ENCODE measurements at regions of chr1 and their contacts with region 1.

Region 1: DNA sequence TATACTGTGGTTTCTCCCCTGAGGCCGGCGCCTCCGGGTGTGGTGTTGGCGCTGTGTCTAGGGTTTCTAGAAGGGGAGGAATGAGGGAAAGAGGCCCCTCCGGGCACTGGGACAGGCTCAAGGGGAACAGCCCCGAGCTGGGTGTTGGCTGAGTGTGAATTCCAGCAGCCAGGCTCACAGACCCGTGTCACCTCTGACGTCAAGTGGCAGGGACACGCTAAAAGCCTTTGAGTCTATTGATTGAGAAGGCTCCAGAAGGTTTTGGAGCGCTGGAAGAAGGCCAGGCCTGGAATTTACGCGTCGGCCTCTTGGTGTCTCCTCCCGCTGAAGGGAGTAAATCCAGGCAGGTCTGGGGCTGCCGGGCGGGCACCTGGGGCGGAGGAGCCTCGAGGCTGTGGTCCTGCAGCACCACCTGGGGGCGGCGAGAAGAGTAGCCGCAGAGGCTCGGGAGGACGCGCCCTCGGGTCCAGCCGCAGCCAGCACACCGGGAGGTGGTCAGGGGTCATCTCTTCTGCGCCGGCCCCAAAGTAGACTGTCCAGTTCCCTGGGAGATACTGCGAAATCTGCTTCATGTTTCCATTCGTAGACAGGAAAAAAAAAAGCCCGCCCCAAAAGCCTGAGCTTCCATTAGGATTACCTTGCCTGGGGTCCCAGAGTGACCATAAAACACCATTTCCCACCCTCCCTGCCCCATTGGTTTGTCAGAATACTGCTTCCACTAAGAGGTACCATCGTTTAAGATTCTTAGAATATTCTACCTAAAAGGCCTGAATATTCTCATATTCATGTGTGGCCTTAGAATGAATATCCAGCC is 61.7 kb downstream of the TLR5 start:
- DNase-seq: peak; percentile 11
- ATAC-seq: peak; percentile 99
- H3K4me3 ChIP-seq: peak overlapping the region; percentile 16; the same call in 1 of the 2 replicates
- H3K27ac ChIP-seq: no peak overlapping the region
- H3K4me1 ChIP-seq: no peaks in the 10 kb centered on the region
- H3K27me3 ChIP-seq: no peaks in the 10 kb centered on the region; a peak in 1 of 4 replicates
- CTCF ChIP-seq: peak; percentile 76 to 94 (median 93); a peak in 5 of 6 replicates
- EP300 ChIP-seq: no peak
- POLR2A ChIP-seq: no peak
- RAD21 ChIP-seq: peak; percentile 85

Region 2: DNA sequence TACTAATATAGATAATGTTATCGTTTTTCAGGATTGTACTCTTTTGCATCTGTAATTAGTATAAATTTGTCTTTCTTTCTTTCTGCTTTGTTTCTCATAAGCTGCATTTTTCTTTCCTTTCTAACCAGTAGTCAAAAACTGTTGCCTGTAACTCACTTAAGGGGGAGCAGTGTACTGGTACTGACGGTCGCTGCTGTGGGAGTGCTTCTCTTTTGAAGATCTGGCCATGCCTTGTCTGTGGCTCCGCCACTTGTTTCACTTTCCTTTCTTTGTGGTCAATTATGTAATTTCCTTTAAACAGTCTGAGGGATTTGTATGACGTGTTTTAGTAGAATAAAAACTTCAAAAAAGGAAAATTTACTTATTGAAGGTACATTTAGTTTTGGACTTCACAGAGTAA is 426.5 kb before region 1 on chr1:
- CTCF ChIA-PET with region 1: no interaction called
- POLR2A ChIA-PET with region 1: no interaction called
- RAD21 ChIA-PET with region 1: interaction called, 4 read pairs
- SMC1A ChIA-PET with region 1: no interaction called
- in situ Hi-C with region 1: loop called (anchors 10 kb)
- intact Hi-C with region 1: no loop called
- DNase-seq: peak; percentile 72
- ATAC-seq: peak; percentile 98
- H3K4me3 ChIP-seq: no peak overlapping the region
- H3K27ac ChIP-seq: no peak overlapping the region
- H3K4me1 ChIP-seq: peaks cover 30% of the 10 kb centered on the region
- H3K27me3 ChIP-seq: no peaks in the 10 kb centered on the region
- CTCF ChIP-seq: peak; percentile 24 to 38 (median 36); a peak in 5 of 6 replicates
- EP300 ChIP-seq: peak; percentile 42 to 56; a peak in 2 of 4 replicates
- POLR2A ChIP-seq: no peak
- RAD21 ChIP-seq: peak; percentile 49

Region 3: GRCh38 chr1:222739465-222739864 is 341.9 kb before region 1 on chr1:
- CTCF ChIA-PET with region 1: interaction called, 13 read pairs
- POLR2A ChIA-PET with region 1: no interaction called
- RAD21 ChIA-PET with region 1: interaction called, 6 read pairs
- SMC1A ChIA-PET with region 1: interaction called, 11 read pairs
- in situ Hi-C with region 1: loop called (anchors 10 kb)
- intact Hi-C with region 1: loop called (anchors 1 kb)
- DNase-seq: no peak
- ATAC-seq: no peak
- H3K4me3 ChIP-seq: no peak overlapping the region
- H3K27ac ChIP-seq: no peak overlapping the region
- H3K4me1 ChIP-seq: no peaks in the 10 kb centered on the region
- H3K27me3 ChIP-seq: no peaks in the 10 kb centered on the region
- CTCF ChIP-seq: no peak
- EP300 ChIP-seq: no peak
- POLR2A ChIP-seq: no peak
- RAD21 ChIP-seq: no peak

Region 4: GRCh38 chr1:222792744-222793143 is 288.6 kb before region 1 on chr1:
- CTCF ChIA-PET with region 1: interaction called, 8 read pairs
- POLR2A ChIA-PET with region 1: no interaction called
- RAD21 ChIA-PET with region 1: no interaction called
- SMC1A ChIA-PET with region 1: interaction called, 4 read pairs
- in situ Hi-C with region 1: no loop called
- intact Hi-C with region 1: loop called (anchors 1 kb)
- DNase-seq: no peak
- ATAC-seq: 0 out of 3 replicates have a peak, but pooled peaks have one; percentile 29
- H3K4me3 ChIP-seq: no peak overlapping the region
- H3K27ac ChIP-seq: no peak overlapping the region
- H3K4me1 ChIP-seq: no peaks in the 10 kb centered on the region
- H3K27me3 ChIP-seq: no peaks in the 10 kb centered on the region; a peak in 1 of 4 replicates
- CTCF ChIP-seq: peak; percentile 19 to 51 (median 32); a peak in 3 of 6 replicates
- EP300 ChIP-seq: no peak
- POLR2A ChIP-seq: no peak
- RAD21 ChIP-seq: peak; percentile 75

Region 5: DNA sequence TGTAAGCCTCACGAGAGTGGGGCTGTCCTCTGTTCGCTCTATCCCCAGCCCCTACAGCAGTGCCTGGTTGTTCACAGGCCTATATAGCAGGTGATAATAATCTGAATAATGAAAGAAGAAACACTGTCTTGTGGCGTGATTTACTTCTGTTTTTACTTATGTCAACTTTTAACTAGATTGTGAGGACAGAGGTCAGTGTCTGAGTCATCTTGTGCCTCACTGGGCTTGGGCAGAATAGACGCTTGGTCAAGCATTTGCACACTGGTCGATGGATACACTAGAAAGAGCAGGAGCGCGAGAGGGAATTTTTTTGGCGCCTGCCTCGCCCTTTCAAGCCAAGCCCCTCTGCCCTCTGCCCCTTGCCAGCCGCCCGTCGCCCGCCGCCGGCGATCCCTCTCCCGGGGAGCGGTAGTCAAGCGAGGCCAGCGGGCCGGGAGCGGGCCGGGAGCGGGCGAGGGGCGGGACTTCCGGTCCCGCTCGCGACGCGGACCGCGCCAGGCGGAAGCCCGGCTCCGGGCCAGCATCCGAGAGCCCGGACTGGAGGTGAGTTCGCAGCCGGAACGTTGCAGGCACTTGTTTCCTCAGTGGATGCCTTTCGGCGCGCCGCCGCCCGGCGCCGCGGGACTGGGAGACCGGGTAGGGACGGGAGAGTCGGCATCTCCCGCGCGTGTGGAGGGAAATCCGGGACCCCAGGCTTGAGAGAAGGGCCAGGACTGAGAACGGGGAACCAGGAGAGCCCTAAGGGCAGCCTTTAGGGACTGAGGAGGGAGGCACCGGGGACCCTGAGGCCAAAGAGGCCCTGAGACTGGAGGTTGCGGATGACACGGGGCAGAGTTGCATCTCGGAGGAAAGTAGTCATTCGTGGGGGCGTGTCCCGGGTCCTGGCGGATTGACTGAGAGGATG is 266.6 kb before region 1 on chr1 and contains the start of gene DISP1:
- CTCF ChIA-PET with region 1: no interaction called
- POLR2A ChIA-PET with region 1: no interaction called
- RAD21 ChIA-PET with region 1: no interaction called
- SMC1A ChIA-PET with region 1: no interaction called
- in situ Hi-C with region 1: no loop called
- intact Hi-C with region 1: loop called (anchors 5 kb)
- DNase-seq: peak; percentile 35
- ATAC-seq: peak; percentile 90
- H3K4me3 ChIP-seq: peak within 1 kb of the TSS; percentile 76
- H3K27ac ChIP-seq: 0 out of 2 replicates have a peak within 1 kb of the TSS, but pooled peaks have one; percentile 29
- H3K4me1 ChIP-seq: no peaks in the 10 kb centered on the region
- H3K27me3 ChIP-seq: no peaks in the 10 kb centered on the region
- CTCF ChIP-seq: no peak
- EP300 ChIP-seq: no peak
- POLR2A ChIP-seq: peak; percentile 83
- RAD21 ChIP-seq: peak; percentile 1; the same call in 1 of the 2 replicates
- polyA plus RNA-seq, gene DISP1: 0.11 to 0.37 TPM

Region 6: GRCh38 chr1:223319905-223320600 is 238.7 kb after region 1 on chr1:
- CTCF ChIA-PET with region 1: no interaction called
- POLR2A ChIA-PET with region 1: no interaction called
- RAD21 ChIA-PET with region 1: no interaction called
- SMC1A ChIA-PET with region 1: no interaction called
- in situ Hi-C with region 1: no loop called
- intact Hi-C with region 1: no loop called
- DNase-seq: no peak
- ATAC-seq: no peak
- H3K4me3 ChIP-seq: no peak overlapping the region
- H3K27ac ChIP-seq: no peak overlapping the region
- H3K4me1 ChIP-seq: no peaks in the 10 kb centered on the region
- H3K27me3 ChIP-seq: 0 out of 4 replicates have a peak, but pooled peaks cover 0 to 2% of the 10 kb centered on the region in 2 experiments
- CTCF ChIP-seq: no peak
- EP300 ChIP-seq: no peak
- POLR2A ChIP-seq: no peak
- RAD21 ChIP-seq: no peak